CD8-positive, alpha-beta T cell (primary cell): ENCODE measurements at regions of chr5 and their contacts with region 1.

Region 1: GRCh38 chr5:36241631-36242533 is at the start of gene NADK2:
- DNase-seq: peak; percentile 83 to 97 (median 92)
- ATAC-seq: peak; percentile 85
- H3K4me3 ChIP-seq: peak within 1 kb of the TSS; percentile 78 to 81
- H3K4me3 Mint-ChIP-seq: peak within 1 kb of the TSS; percentile 87
- H3K27ac ChIP-seq: peak within 1 kb of the TSS; percentile 87 to 92
- H3K27ac Mint-ChIP-seq: peak within 1 kb of the TSS; percentile 89
- H3K4me1 ChIP-seq: peaks cover 22% of the 10 kb centered on the region
- H3K4me1 Mint-ChIP-seq: peaks cover 49% of the 10 kb centered on the region
- H3K27me3 ChIP-seq: no peaks in the 10 kb centered on the region
- H3K27me3 Mint-ChIP-seq: no peaks in the 10 kb centered on the region
- CTCF ChIP-seq: peak; percentile 59
- total RNA-seq, gene NADK2: 11.1 to 12.3 TPM

Region 2: DNA sequence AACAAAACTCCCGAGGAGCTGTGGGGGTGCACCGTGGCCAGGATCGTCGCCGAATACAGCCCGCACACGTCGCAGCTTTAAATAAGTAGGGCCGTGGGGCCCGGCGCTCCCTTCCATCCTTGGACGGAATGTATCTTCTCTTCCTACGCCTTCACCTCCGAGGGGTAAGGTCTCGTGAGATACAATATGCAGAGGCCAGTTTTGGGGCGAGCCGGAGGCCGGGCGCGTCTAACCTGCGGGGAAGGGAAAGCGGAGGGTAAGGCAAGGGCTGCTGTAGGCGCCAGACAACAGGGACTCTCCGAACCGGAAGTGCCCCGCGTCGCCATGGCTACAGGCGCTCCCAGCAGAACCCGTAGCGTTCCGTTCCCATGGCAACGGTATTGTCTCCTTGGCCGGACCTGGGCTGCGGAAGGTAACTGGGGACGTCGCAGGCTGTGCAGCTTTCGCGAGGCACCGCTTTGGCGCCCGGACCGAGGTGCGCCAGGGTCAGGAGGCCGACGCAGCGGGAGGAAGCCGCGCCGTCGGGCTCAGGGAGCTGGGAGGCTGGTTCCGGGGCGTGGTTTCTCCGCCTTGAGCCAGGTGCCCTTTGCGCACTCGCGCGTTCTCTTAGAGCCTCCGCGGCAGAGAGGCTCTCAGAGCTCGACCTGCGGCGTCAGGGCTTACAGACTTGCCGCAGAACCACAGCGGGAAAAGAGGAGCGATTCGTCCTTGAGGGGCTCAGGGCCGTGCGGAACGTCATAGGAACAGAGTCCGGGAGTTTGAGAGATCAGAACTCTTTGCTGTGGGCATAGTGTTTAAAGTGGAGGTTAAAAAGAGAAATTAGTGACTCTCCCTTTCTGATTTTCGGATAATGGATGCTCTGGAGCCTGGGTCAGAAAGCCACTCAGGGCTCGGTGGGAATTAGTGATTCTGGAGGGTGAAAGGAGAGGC is 1402.8 kb before region 1 on chr5 and contains the start of gene TTC23L:
- CTCF ChIA-PET with region 1: no interaction called
- POLR2A ChIA-PET with region 1: no interaction called
- intact Hi-C with region 1: loop called (anchors 2 to 5 kb)
- DNase-seq: peak; percentile 77 to 97 (median 91)
- ATAC-seq: peak; percentile 90
- H3K4me3 ChIP-seq: peak within 1 kb of the TSS; percentile 73 to 74
- H3K4me3 Mint-ChIP-seq: peak within 1 kb of the TSS; percentile 95
- H3K27ac ChIP-seq: peak within 1 kb of the TSS; percentile 57 to 80
- H3K27ac Mint-ChIP-seq: peak within 1 kb of the TSS; percentile 96
- H3K4me1 ChIP-seq: peaks cover 3% of the 10 kb centered on the region
- H3K4me1 Mint-ChIP-seq: peaks cover 10% of the 10 kb centered on the region
- H3K27me3 ChIP-seq: peaks cover 0 to 3% of the 10 kb centered on the region in 2 experiments
- H3K27me3 Mint-ChIP-seq: no peaks in the 10 kb centered on the region
- CTCF ChIP-seq: no peak
- total RNA-seq, gene TTC23L: not detected

Region 3: DNA sequence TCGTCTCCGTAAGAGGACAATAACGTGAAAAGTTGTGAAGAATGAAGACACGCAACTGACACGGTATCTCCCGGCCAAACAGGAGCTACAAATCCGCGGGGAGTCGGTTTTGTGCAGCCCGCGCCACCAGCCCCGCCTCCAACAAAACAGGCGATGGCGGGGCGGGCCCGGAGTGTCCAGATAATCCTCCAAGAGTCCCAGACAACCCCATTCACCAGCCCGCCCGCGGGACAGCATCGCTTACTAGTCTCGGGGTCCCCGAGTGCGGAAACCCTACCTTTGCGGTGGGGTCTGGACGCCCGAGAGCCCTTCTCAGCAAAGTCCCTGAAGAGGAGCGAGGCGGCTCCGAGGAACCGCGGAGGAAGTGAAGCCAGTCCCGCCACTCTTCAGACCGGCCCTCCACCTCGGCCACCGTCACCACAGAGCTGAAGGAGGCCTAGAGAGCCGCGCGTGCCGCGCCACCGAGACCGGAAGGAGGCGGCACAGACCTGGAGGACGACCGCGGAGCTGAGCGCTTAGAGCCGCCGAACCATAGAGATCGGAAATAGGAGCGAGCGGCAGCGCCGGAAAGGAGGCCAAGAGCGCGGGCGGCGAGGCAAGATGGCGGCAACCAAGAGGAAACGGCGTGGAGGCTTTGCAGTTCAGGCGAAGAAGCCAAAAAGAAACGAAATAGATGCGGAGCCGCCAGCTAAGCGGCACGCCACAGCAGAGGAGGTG is 1326.6 kb before region 1 on chr5 and contains the starts of genes BRIX1 and RAD1:
- CTCF ChIA-PET with region 1: no interaction called
- POLR2A ChIA-PET with region 1: no interaction called
- intact Hi-C with region 1: loop called in 1 of 2 experiments (anchors 2 kb)
- DNase-seq: peak; percentile 83 to 97 (median 93)
- ATAC-seq: peak; percentile 94
- H3K4me3 ChIP-seq: peak within 1 kb of the TSS; percentile 76 to 97
- H3K4me3 Mint-ChIP-seq: no peak within 1 kb of the TSS
- H3K27ac ChIP-seq: peak within 1 kb of the TSS; percentile 79 to 86
- H3K27ac Mint-ChIP-seq: no peak within 1 kb of the TSS
- H3K4me1 ChIP-seq: peaks cover 24% of the 10 kb centered on the region
- H3K4me1 Mint-ChIP-seq: peaks cover 37% of the 10 kb centered on the region
- H3K27me3 ChIP-seq: no peaks in the 10 kb centered on the region
- H3K27me3 Mint-ChIP-seq: no peaks in the 10 kb centered on the region
- CTCF ChIP-seq: no peak
- total RNA-seq, gene BRIX1: 34.9 to 40.9 TPM
- total RNA-seq, gene RAD1: 34.7 to 35.4 TPM

Region 4: DNA sequence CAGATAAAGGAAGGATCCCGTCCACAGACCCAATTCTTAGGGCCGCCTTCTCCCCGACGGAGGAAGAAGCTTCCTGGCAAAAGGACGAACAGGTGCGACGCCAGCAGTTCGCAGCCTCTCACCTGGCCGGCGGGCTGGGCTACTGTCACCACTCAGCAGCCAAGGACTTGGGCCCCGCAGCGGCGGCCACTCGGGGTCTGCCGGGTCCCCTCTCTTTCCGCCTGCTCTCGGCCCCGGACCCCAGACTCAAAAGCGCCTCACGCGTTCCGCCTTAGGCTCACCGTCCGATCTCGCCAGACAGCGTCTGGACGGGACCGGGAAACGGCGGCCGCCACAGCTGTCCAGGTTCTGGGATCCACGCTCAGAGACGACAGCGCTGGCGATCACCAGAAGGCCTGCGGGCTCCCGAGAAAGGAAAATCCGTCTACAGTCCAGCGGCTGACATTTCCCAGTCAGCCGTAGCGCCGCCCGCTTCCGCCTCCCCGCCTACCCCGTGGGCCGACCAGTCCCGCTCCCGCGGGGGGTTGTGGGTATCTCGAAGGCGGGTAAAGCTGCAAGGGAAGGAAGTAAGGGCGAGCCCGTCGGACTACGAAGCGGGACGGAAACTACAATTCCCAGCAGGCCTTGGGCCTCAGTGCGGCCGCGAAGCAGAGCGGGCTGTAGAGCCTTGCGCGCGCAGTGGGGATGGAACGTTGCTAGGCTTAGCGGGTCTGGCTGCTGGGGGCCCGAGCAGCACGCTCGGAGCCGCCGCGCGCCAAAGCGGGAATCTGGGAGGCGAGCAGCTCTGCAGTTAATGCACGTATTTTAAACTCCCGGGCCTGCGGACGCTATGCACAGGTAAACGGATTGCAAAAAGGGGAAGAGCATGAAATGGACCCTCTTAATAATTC is 90.2 kb before region 1 on chr5 and contains the starts of genes LMBRD2 and SKP2:
- CTCF ChIA-PET with region 1: interaction called, 5 read pairs
- POLR2A ChIA-PET with region 1: interaction called, 43 read pairs
- intact Hi-C with region 1: loop called (anchors 1 to 2 kb)
- DNase-seq: peak; percentile 94 to 99 (median 96)
- ATAC-seq: peak; percentile 95
- H3K4me3 ChIP-seq: peak within 1 kb of the TSS; percentile 82 to 94
- H3K4me3 Mint-ChIP-seq: peak within 1 kb of the TSS; percentile 92
- H3K27ac ChIP-seq: peak within 1 kb of the TSS; percentile 79 to 84
- H3K27ac Mint-ChIP-seq: peak within 1 kb of the TSS; percentile 91
- H3K4me1 ChIP-seq: peaks cover 34% of the 10 kb centered on the region
- H3K4me1 Mint-ChIP-seq: peaks cover 70% of the 10 kb centered on the region
- H3K27me3 ChIP-seq: no peaks in the 10 kb centered on the region
- H3K27me3 Mint-ChIP-seq: no peaks in the 10 kb centered on the region
- CTCF ChIP-seq: no peak
- total RNA-seq, gene LMBRD2: 2.2 to 2.4 TPM
- total RNA-seq, gene SKP2: 5.5 to 6.1 TPM

Region 5: GRCh38 chr5:36870399-36871040 is 628.6 kb after region 1 on chr5:
- CTCF ChIA-PET with region 1: no interaction called
- POLR2A ChIA-PET with region 1: no interaction called
- intact Hi-C with region 1: loop called (anchors 2 to 5 kb)
- DNase-seq: peak in 2 of 9 experiments; percentile 73 to 82
- ATAC-seq: peak; percentile 75
- H3K4me3 ChIP-seq: no peak overlapping the region
- H3K4me3 Mint-ChIP-seq: no peak overlapping the region
- H3K27ac ChIP-seq: no peak overlapping the region
- H3K27ac Mint-ChIP-seq: peak overlapping the region; percentile 20
- H3K4me1 ChIP-seq: peaks cover 25% of the 10 kb centered on the region
- H3K4me1 Mint-ChIP-seq: peaks cover 46% of the 10 kb centered on the region
- H3K27me3 ChIP-seq: no peaks in the 10 kb centered on the region
- H3K27me3 Mint-ChIP-seq: no peaks in the 10 kb centered on the region
- CTCF ChIP-seq: peak; percentile 67

Region 6: GRCh38 chr5:36934740-36935356 is 693.0 kb after region 1 on chr5:
- CTCF ChIA-PET with region 1: no interaction called
- POLR2A ChIA-PET with region 1: no interaction called
- intact Hi-C with region 1: loop called in 1 of 2 experiments (anchors 10 kb)
- DNase-seq: no peak
- ATAC-seq: no peak
- H3K4me3 ChIP-seq: no peak overlapping the region
- H3K4me3 Mint-ChIP-seq: no peak overlapping the region
- H3K27ac ChIP-seq: no peak overlapping the region
- H3K27ac Mint-ChIP-seq: no peak overlapping the region
- H3K4me1 ChIP-seq: peaks cover 37% of the 10 kb centered on the region
- H3K4me1 Mint-ChIP-seq: peaks cover 84% of the 10 kb centered on the region
- H3K27me3 ChIP-seq: no peaks in the 10 kb centered on the region
- H3K27me3 Mint-ChIP-seq: no peaks in the 10 kb centered on the region
- CTCF ChIP-seq: no peak

Region 7: GRCh38 chr5:37370864-37371726 is 1129.2 kb after region 1 on chr5 and contains the start of gene NUP155:
- CTCF ChIA-PET with region 1: no interaction called
- POLR2A ChIA-PET with region 1: no interaction called
- intact Hi-C with region 1: loop called (anchors 2 to 10 kb)
- DNase-seq: peak; percentile 71 to 96 (median 88)
- ATAC-seq: peak; percentile 93
- H3K4me3 ChIP-seq: peak within 1 kb of the TSS; percentile 92 to 95
- H3K4me3 Mint-ChIP-seq: peak within 1 kb of the TSS; percentile 97
- H3K27ac ChIP-seq: peak within 1 kb of the TSS; percentile 88 to 93
- H3K27ac Mint-ChIP-seq: peak within 1 kb of the TSS; percentile 97
- H3K4me1 ChIP-seq: peaks cover 18% of the 10 kb centered on the region
- H3K4me1 Mint-ChIP-seq: peaks cover 32% of the 10 kb centered on the region
- H3K27me3 ChIP-seq: no peaks in the 10 kb centered on the region
- H3K27me3 Mint-ChIP-seq: no peaks in the 10 kb centered on the region
- CTCF ChIP-seq: no peak
- total RNA-seq, gene NUP155: 22.9 to 27.4 TPM